GM12878 (cell line): ENCODE measurements at regions of chr13 and their contacts with region 1.

Region 1: DNA sequence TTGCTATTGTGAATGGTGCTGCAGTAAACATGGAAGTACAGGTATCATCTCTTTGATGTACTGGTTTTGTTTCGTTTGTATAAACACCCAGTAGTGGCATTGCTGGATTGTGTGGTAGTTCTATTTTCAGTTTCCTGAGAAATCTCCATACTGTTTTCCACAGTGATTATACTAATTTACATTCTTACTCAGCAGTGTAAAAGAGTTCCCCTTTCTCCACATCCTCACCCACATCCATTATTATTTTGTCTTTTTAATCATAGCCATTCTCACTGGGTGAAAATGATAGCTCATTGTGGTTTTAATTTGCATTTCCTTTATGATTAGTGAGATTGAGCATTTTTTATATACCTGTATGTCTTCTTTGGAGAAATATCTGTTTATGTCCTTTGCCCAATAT is 62.3 kb upstream of the PARP4 start:
- DNase-seq: no peak
- ATAC-seq: no peak; the same call in 2 of the 3 replicates
- H3K4me3 ChIP-seq: no peak overlapping the region
- H3K27ac ChIP-seq: no peak overlapping the region
- H3K4me1 ChIP-seq: no peaks in the 10 kb centered on the region
- H3K27me3 ChIP-seq: no peaks in the 10 kb centered on the region
- CTCF ChIP-seq: no peak
- EP300 ChIP-seq: no peak
- POLR2A ChIP-seq: no peak
- RAD21 ChIP-seq: no peak

Region 2: DNA sequence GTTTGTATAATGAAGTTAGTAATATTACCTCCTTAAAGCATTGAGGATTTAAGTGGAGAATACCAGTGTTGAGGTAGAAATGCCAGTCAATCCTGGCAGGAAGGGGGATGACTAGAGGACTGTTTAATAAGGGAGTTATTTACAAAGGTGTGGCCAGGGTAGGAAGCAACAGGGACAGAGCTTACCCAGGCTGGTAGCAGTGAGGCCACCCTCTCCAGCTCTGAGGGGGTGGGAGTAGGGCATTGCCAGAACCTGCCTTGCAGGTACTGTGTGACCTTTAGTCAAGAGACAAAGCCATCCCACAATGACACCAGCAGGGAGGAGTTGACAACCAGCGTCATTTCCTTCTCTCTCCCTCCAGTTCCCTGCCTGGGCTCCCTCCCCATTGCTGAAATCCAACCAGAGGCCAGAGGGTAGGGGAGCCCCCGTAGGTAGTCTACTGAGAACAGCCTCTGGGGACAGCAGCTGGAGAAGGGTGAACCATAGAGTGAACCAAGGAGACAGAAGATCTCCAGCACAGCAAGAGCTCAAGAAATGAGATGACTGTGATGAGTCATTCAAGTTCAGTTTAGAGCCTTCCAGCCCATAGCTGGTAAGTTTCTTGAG is 447.7 kb before region 1 on chr13:
- CTCF ChIA-PET with region 1: no interaction called
- POLR2A ChIA-PET with region 1: no interaction called
- RAD21 ChIA-PET with region 1: no interaction called
- SMC1A ChIA-PET with region 1: no interaction called
- in situ Hi-C with region 1: no loop called
- intact Hi-C with region 1: no loop called
- DNase-seq: peak; percentile 16
- ATAC-seq: peak; percentile 39
- H3K4me3 ChIP-seq: no peak overlapping the region
- H3K27ac ChIP-seq: no peak overlapping the region
- H3K4me1 ChIP-seq: peaks cover 7% of the 10 kb centered on the region; the same call in 1 of the 2 replicates
- H3K27me3 ChIP-seq: no peaks in the 10 kb centered on the region; a peak in 1 of 4 replicates
- CTCF ChIP-seq: no peak
- EP300 ChIP-seq: no peak
- POLR2A ChIP-seq: no peak
- RAD21 ChIP-seq: no peak

Region 3: DNA sequence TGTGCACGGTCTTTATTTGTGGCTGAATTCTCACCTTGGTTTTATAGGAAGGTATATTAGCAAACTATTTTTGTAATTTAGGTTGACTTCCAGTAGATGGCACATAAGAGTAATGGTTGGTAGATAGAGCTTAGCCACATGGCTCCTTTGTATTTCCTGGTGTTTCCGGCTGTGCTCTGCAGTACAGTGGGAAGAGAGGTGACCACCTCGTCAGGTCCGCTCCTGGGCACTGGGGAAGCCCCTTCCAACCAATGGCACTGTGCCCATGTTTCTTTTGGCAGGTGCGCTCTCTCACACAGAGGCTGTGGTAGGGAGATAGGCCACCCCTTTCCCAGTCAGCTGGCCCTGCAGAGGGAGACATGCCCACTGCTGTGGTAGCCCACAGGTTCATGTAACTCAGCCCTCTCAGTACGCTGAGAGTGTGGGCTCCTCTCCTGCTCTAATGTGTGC is 31.1 kb after region 1 on chr13:
- CTCF ChIA-PET with region 1: interaction called, 11 read pairs
- POLR2A ChIA-PET with region 1: no interaction called
- RAD21 ChIA-PET with region 1: interaction called, 3 read pairs
- SMC1A ChIA-PET with region 1: no interaction called
- in situ Hi-C with region 1: no loop called
- intact Hi-C with region 1: no loop called
- DNase-seq: no peak
- ATAC-seq: peak; percentile 79
- H3K4me3 ChIP-seq: no peak overlapping the region
- H3K27ac ChIP-seq: no peak overlapping the region
- H3K4me1 ChIP-seq: peaks cover 7% of the 10 kb centered on the region
- H3K27me3 ChIP-seq: no peaks in the 10 kb centered on the region
- CTCF ChIP-seq: peak in 2 of 3 experiments; percentile 23 to 29; a peak in 4 of 6 replicates
- EP300 ChIP-seq: no peak
- POLR2A ChIP-seq: no peak
- RAD21 ChIP-seq: peak; percentile 42

Region 4: DNA sequence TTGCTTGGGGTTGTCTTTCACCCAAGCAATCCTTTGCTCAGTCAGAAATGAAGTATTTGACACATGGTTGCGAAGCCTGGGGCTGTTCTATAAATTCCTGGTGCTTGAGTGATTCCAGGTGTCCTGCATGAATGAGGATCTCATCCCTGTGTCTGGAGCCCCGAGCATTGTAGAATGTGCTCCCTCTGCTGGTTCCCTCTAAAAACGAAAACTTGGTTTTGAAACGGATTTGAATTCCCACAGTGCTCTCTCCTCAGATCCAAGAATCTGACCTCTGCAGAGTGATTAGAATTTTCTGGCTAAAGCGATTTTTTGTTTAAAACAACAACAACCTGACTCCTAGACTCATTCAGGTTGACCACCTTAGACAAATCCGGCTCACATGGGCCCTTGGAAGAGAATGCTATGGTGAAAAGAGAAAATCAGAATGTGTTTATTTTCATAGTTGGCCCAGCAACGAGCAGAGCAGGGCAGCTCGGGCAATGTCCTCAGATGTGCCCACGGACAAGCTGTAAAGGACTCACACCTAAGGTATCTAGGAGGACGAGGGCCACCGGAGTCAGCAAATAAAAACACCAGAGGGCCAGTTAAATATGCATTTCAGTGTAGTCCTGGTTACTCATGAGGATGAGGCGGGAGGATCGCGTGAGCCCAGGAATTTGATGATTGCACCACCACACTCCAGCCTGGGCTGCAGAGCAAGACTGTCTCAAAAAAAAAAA is 96.7 kb after region 1 on chr13:
- CTCF ChIA-PET with region 1: interaction called, 34 read pairs
- POLR2A ChIA-PET with region 1: no interaction called
- RAD21 ChIA-PET with region 1: no interaction called
- SMC1A ChIA-PET with region 1: interaction called, 10 read pairs
- in situ Hi-C with region 1: no loop called
- intact Hi-C with region 1: loop called (anchors 2 kb)
- DNase-seq: no peak
- ATAC-seq: peak; percentile 64
- H3K4me3 ChIP-seq: no peak overlapping the region
- H3K27ac ChIP-seq: no peak overlapping the region
- H3K4me1 ChIP-seq: no peaks in the 10 kb centered on the region
- H3K27me3 ChIP-seq: peaks cover 0 to 2% of the 10 kb centered on the region in 2 experiments; a peak in 2 of 4 replicates
- CTCF ChIP-seq: peak; percentile 50 to 66 (median 65)
- EP300 ChIP-seq: no peak
- POLR2A ChIP-seq: no peak
- RAD21 ChIP-seq: peak; percentile 62

Region 5: GRCh38 chr13:24727731-24728601 is 153.1 kb after region 1 on chr13:
- CTCF ChIA-PET with region 1: interaction called, 5 read pairs
- POLR2A ChIA-PET with region 1: no interaction called
- RAD21 ChIA-PET with region 1: interaction called, 5 read pairs
- SMC1A ChIA-PET with region 1: interaction called, 4 read pairs
- in situ Hi-C with region 1: loop called (anchors 5 kb)
- intact Hi-C with region 1: no loop called
- DNase-seq: peak; percentile 43
- ATAC-seq: peak; percentile 93
- H3K4me3 ChIP-seq: no peak overlapping the region
- H3K27ac ChIP-seq: no peak overlapping the region
- H3K4me1 ChIP-seq: peaks cover 9% of the 10 kb centered on the region; the same call in 1 of the 2 replicates
- H3K27me3 ChIP-seq: peaks cover 0 to 3% of the 10 kb centered on the region in 2 experiments; a peak in 1 of 4 replicates
- CTCF ChIP-seq: peak; percentile 76 to 83 (median 83)
- EP300 ChIP-seq: no peak
- POLR2A ChIP-seq: no peak
- RAD21 ChIP-seq: peak; percentile 94